ENCODE measurements at regions of chr2 and their contacts with region 1.

Region 1: GRCh38 chr2:54818226-54818625 is 94.8 kb downstream of the EML6 start:
- DNase-seq: no peak
- ATAC-seq: no peak
- H3K4me3 ChIP-seq: no peak overlapping the region
- H3K4me3 Mint-ChIP-seq: no peak overlapping the region
- H3K27ac ChIP-seq: no peak overlapping the region
- H3K27ac Mint-ChIP-seq: no peak overlapping the region
- H3K4me1 ChIP-seq: no peaks in the 10 kb centered on the region
- H3K4me1 Mint-ChIP-seq: no peaks in the 10 kb centered on the region
- H3K27me3 ChIP-seq: no peaks in the 10 kb centered on the region
- H3K27me3 Mint-ChIP-seq: peaks cover 2 to 16% of the 10 kb centered on the region in 2 donors

Region 2: DNA sequence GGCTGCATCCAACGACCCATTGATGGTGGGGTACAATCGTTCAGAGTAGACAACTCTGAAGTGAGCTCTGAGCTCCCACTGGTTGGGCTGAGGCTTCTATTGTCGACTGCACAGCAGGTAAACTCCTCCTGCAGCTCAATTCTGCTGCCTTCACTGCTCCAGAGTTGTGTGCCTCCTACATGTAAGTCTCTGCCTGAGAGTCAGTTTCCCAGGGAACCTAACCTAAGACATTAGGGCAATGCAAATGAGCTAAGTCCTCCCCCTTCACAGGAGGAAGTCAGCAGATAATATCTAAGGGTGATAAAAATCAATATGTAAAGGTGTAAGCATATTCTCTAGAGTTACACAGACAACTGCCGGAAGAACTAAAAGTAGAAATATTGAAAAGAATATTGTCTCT is 725.3 kb before region 1 on chr2:
- CTCF ChIA-PET with region 1: no interaction called
- POLR2A ChIA-PET with region 1: interaction called in 1 of 2 experiments, 13 read pairs
- DNase-seq: peak in 2 of 35 experiments; percentile 11 to 45
- ATAC-seq: peak; percentile 71 to 89 (median 80)
- H3K4me3 ChIP-seq: no peak overlapping the region
- H3K4me3 Mint-ChIP-seq: peak overlapping the region; percentile 25 to 63 (median 35)
- H3K27ac ChIP-seq: peak overlapping the region; percentile 37
- H3K27ac Mint-ChIP-seq: peak overlapping the region; percentile 85 to 92
- H3K4me1 ChIP-seq: peaks cover 13 to 23% of the 10 kb centered on the region in 2 experiments
- H3K4me1 Mint-ChIP-seq: peaks cover 23 to 34% (median 27%) of the 10 kb centered on the region in 3 donors
- H3K27me3 ChIP-seq: no peaks in the 10 kb centered on the region
- H3K27me3 Mint-ChIP-seq: no peaks in the 10 kb centered on the region

Measured in T-cell (primary cell).